AG04449 (cell line): ENCODE measurements at regions of chr1 and their contacts with region 1.

Region 1: DNA sequence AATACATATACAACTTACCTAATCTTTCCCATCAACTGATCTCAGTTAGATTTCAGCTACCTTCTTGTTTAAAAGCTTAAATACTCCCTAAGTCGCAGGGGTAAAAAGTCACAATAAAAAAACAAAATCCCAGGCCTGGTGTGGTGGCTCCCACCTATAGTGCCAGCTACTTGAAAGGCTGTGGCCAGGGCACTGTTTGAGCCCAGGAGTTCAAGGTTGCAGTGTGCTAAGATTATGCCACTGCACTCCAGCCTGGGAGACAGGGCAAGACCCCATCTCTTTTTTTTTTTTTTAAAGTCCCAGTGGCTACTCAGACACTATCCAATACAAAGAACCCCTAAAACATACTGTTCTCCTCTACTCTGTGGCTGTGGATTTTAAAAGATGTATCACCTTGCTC is 228.3 kb downstream of the DENND1B start:
- DNase-seq: no peak
- H3K4me3 ChIP-seq: no peak overlapping the region
- CTCF ChIP-seq: no peak

Region 2: DNA sequence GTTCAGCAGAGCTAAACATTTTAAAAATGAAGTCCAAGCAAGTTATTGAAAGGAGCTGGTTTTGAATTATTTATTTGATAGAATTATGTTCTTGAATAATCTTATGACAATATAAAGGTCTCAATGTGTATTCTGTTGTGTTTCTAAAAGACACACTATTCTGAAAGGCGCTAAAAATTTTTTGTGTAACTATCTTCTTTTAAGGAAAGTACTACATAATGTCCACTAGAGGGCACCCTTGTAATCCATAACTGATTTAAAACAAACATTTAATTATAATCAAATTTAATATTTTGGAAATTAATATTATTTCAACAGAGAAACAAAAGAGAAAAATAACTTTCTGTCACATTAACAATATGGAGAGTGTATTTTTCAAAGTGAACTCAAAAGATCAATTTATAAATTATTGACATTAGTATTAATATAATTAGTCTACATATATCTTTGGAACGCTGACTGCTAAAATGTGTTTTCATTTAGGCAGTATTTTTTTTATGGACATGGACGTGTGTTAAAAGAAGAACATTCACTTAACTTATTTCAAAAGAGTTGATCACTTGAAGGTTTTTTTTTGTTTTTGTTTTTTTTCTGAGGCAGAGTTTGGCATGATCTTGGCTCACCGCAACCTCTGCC is 20.1 kb before region 1 on chr1:
- CTCF ChIA-PET with region 1: interaction called, 55 read pairs
- POLR2A ChIA-PET with region 1: no interaction called
- DNase-seq: no peak
- H3K4me3 ChIP-seq: no peak overlapping the region
- CTCF ChIP-seq: peak; percentile 2